PC-3 (cell line): ENCODE measurements at regions of chr1 and their contacts with region 1.

Region 1: GRCh38 chr1:115430441-115431116 is 92.5 kb upstream of the NGF start:
- DNase-seq: peak; percentile 95
- ATAC-seq: peak; percentile 74
- H3K4me3 ChIP-seq: no peak overlapping the region
- H3K27ac ChIP-seq: peak overlapping the region; percentile 92
- H3K4me1 ChIP-seq: peaks cover 58% of the 10 kb centered on the region
- H3K27me3 ChIP-seq: no peaks in the 10 kb centered on the region
- CTCF ChIP-seq: no peak

Region 2: GRCh38 chr1:115258302-115258866 is 172.2 kb before region 1 on chr1:
- CTCF ChIA-PET with region 1: no interaction called
- POLR2A ChIA-PET with region 1: interaction called, 11 read pairs
- intact Hi-C with region 1: no loop called
- DNase-seq: peak; percentile 19
- ATAC-seq: no peak
- H3K4me3 ChIP-seq: no peak overlapping the region
- H3K27ac ChIP-seq: no peak overlapping the region
- H3K4me1 ChIP-seq: no peaks in the 10 kb centered on the region
- H3K27me3 ChIP-seq: no peaks in the 10 kb centered on the region
- CTCF ChIP-seq: no peak